CD4-positive, alpha-beta T cell (primary cell): ENCODE measurements at regions of chr12 and their contacts with region 1.

Region 1: GRCh38 chr12:107607464-107608392 is 77.9 kb upstream of the PWP1 start:
- DNase-seq: peak; percentile 73 to 90 (median 76)
- ATAC-seq: peak; percentile 76
- H3K4me3 ChIP-seq: no peak overlapping the region
- H3K4me3 Mint-ChIP-seq: no peak overlapping the region
- H3K27ac ChIP-seq: no peak overlapping the region
- H3K27ac Mint-ChIP-seq: no peak overlapping the region
- H3K4me1 ChIP-seq: no peaks in the 10 kb centered on the region
- H3K4me1 Mint-ChIP-seq: no peaks in the 10 kb centered on the region
- H3K27me3 ChIP-seq: no peaks in the 10 kb centered on the region
- H3K27me3 Mint-ChIP-seq: no peaks in the 10 kb centered on the region
- CTCF ChIP-seq: peak; percentile 95

Region 2: DNA sequence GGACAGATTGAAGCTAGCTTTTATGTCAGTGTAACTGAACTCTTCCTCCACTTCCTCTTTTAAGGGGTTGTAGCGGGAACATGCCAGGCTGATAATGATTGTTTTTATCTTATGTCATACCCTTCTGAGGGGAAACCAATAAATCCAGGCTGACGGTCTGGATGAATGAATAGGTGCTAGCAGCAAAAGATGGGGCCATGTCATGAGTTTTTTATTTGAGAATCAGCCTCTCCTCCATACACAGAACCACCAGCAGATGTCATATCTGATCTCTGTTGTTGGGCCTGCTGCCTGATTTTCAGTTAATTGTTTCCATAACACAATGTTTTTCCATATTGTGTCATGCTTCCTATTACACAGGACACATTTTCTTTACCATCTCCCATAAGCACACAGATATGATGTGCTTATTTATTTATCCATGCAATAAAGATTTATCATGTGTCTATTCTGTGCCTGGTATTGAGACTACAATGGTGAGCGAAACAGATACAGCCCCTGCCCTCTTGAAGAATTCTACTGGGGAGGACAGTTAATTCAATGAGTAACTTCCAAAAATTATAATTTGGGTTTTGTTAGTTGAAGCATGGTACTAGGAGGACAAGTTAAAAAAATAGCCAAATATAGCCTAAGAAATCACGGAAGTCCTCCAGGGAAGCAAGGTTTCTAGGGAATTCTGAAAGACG is 480.8 kb before region 1 on chr12:
- CTCF ChIA-PET with region 1: interaction called, 37 read pairs
- POLR2A ChIA-PET with region 1: interaction called, 6 read pairs
- intact Hi-C with region 1: loop called (anchors 1 kb)
- DNase-seq: peak in 2 of 14 experiments; percentile 19 to 20
- ATAC-seq: no peak
- H3K4me3 ChIP-seq: no peak overlapping the region
- H3K4me3 Mint-ChIP-seq: no peak overlapping the region
- H3K27ac ChIP-seq: no peak overlapping the region
- H3K27ac Mint-ChIP-seq: no peak overlapping the region
- H3K4me1 ChIP-seq: peaks cover 1% of the 10 kb centered on the region
- H3K4me1 Mint-ChIP-seq: no peaks in the 10 kb centered on the region
- H3K27me3 ChIP-seq: peaks cover 0 to 6% of the 10 kb centered on the region in 2 experiments
- H3K27me3 Mint-ChIP-seq: peaks cover 22% of the 10 kb centered on the region
- CTCF ChIP-seq: peak; percentile 21

Region 3: DNA sequence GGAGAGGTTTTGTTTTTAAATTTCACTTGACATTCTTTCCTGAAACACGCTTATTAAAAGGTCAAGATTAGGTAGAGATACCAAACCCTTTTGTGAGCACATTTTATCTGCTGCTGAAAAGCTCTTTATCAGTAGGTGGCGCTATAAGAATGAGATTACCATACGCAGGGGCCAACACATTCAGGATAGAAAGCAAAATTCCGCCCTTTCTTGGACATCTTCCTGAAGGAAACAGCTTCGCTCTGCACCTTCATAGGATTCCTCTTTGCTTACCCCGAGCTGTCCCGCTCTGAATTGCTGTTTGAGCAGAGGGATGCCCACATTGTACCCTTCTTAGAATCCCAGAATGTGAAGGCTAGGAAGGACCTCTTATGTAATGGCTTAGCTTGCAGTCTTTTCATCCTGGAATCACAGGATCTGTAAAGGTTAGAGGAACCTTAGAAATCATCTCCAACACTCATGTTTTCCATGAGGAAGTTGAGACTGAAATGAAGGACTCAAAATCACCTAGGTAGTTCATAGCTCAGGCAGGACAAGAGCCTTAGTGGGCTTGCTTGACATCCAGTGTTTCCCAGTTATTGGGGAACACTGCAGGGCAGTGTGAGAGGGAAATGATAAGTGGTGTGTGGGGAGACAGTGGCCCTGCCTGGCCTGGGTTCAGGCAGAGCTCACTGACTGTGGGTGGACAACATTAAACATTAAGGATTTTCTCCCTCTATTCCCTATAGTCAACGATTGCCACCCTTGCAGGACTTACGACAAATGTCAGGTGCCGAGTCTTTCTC is 475.7 kb before region 1 on chr12:
- CTCF ChIA-PET with region 1: interaction called, 37 read pairs
- POLR2A ChIA-PET with region 1: interaction called, 6 read pairs
- intact Hi-C with region 1: loop called (anchors 1 kb)
- DNase-seq: peak in 6 of 14 experiments; percentile 5 to 70 (median 44)
- ATAC-seq: peak; percentile 57
- H3K4me3 ChIP-seq: no peak overlapping the region
- H3K4me3 Mint-ChIP-seq: no peak overlapping the region
- H3K27ac ChIP-seq: no peak overlapping the region
- H3K27ac Mint-ChIP-seq: no peak overlapping the region
- H3K4me1 ChIP-seq: peaks cover 7% of the 10 kb centered on the region
- H3K4me1 Mint-ChIP-seq: no peaks in the 10 kb centered on the region
- H3K27me3 ChIP-seq: no peaks in the 10 kb centered on the region
- H3K27me3 Mint-ChIP-seq: no peaks in the 10 kb centered on the region
- CTCF ChIP-seq: peak; percentile 89

Region 4: DNA sequence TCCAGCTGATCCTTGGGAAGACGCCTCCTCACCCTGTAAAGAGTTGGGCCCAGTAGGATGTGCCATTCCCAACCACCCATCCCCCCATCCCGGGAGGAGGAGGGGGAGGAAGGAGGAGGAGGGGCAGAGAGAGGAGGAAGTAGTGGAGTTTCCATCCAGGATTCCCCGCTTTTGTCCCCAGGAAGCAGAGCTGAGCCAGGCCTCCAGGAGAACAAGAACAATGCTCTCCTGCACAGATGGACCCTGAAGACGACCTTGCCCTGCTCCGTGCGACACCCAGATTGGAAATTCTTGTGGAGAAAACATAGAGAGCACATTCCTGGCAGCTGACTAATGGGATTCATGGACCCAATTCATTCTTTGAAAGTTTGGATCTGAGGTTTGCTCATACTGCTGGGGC is 382.1 kb before region 1 on chr12:
- CTCF ChIA-PET with region 1: no interaction called
- POLR2A ChIA-PET with region 1: no interaction called
- intact Hi-C with region 1: loop called in 1 of 2 experiments (anchors 5 kb)
- DNase-seq: no peak
- ATAC-seq: no peak
- H3K4me3 ChIP-seq: no peak overlapping the region
- H3K4me3 Mint-ChIP-seq: no peak overlapping the region
- H3K27ac ChIP-seq: no peak overlapping the region
- H3K27ac Mint-ChIP-seq: no peak overlapping the region
- H3K4me1 ChIP-seq: no peaks in the 10 kb centered on the region
- H3K4me1 Mint-ChIP-seq: no peaks in the 10 kb centered on the region
- H3K27me3 ChIP-seq: peaks cover 0 to 4% of the 10 kb centered on the region in 2 experiments
- H3K27me3 Mint-ChIP-seq: peaks cover 16% of the 10 kb centered on the region
- CTCF ChIP-seq: no peak